H1 (cell line): ENCODE measurements at regions of chr17 and their contacts with region 1.

Region 1: GRCh38 chr17:41801374-41802271 is 10.1 kb downstream of the P3H4 start:
- DNase-seq: peak in 1 of 2 experiments; percentile 97
- H3K4me3 ChIP-seq: peak overlapping the region in 2 of 4 experiments; percentile 21 to 34; a peak in 4 of 8 replicates
- H3K27ac ChIP-seq: 0 out of 2 replicates have a peak overlapping the region, but pooled peaks have one; percentile 1
- H3K4me1 ChIP-seq: peaks cover 5 to 15% (median 10%) of the 10 kb centered on the region in 4 experiments
- H3K27me3 ChIP-seq: no peaks in the 10 kb centered on the region
- CTCF ChIP-seq: peak; percentile 92 to 97 (median 97)
- EP300 ChIP-seq: no peak
- POLR2A ChIP-seq: peak in 1 of 2 experiments; percentile 17; a peak in 1 of 3 replicates
- RAD21 ChIP-seq: peak; percentile 88 to 91

Region 2: GRCh38 chr17:41750862-41751261 is 50.8 kb before region 1 on chr17:
- CTCF ChIA-PET with region 1: interaction called, 48 read pairs
- POLR2A ChIA-PET with region 1: interaction called, 8 read pairs
- DNase-seq: no peak
- H3K4me3 ChIP-seq: no peak overlapping the region
- H3K27ac ChIP-seq: no peak overlapping the region
- H3K4me1 ChIP-seq: no peaks in the 10 kb centered on the region
- H3K27me3 ChIP-seq: no peaks in the 10 kb centered on the region; a peak in 2 of 7 replicates
- CTCF ChIP-seq: no peak
- EP300 ChIP-seq: no peak
- POLR2A ChIP-seq: no peak
- RAD21 ChIP-seq: no peak

Region 3: GRCh38 chr17:41762841-41763240 is 38.8 kb before region 1 on chr17:
- CTCF ChIA-PET with region 1: interaction called, 25 read pairs
- POLR2A ChIA-PET with region 1: interaction called, 3 read pairs
- DNase-seq: no peak
- H3K4me3 ChIP-seq: no peak overlapping the region
- H3K27ac ChIP-seq: no peak overlapping the region; the same call in 1 of the 2 replicates
- H3K4me1 ChIP-seq: no peaks in the 10 kb centered on the region
- H3K27me3 ChIP-seq: no peaks in the 10 kb centered on the region
- CTCF ChIP-seq: no peak
- EP300 ChIP-seq: no peak
- POLR2A ChIP-seq: no peak
- RAD21 ChIP-seq: no peak

Region 4: GRCh38 chr17:41777574-41778188 is 23.9 kb before region 1 on chr17:
- CTCF ChIA-PET with region 1: interaction called, 55 read pairs
- POLR2A ChIA-PET with region 1: interaction called, 71 read pairs
- DNase-seq: no peak
- H3K4me3 ChIP-seq: no peak overlapping the region
- H3K27ac ChIP-seq: no peak overlapping the region
- H3K4me1 ChIP-seq: peaks cover 0 to 49% (median 29%) of the 10 kb centered on the region in 4 experiments; a peak in 6 of 7 replicates
- H3K27me3 ChIP-seq: no peaks in the 10 kb centered on the region
- CTCF ChIP-seq: no peak
- EP300 ChIP-seq: no peak
- POLR2A ChIP-seq: no peak
- RAD21 ChIP-seq: no peak

Region 5: DNA sequence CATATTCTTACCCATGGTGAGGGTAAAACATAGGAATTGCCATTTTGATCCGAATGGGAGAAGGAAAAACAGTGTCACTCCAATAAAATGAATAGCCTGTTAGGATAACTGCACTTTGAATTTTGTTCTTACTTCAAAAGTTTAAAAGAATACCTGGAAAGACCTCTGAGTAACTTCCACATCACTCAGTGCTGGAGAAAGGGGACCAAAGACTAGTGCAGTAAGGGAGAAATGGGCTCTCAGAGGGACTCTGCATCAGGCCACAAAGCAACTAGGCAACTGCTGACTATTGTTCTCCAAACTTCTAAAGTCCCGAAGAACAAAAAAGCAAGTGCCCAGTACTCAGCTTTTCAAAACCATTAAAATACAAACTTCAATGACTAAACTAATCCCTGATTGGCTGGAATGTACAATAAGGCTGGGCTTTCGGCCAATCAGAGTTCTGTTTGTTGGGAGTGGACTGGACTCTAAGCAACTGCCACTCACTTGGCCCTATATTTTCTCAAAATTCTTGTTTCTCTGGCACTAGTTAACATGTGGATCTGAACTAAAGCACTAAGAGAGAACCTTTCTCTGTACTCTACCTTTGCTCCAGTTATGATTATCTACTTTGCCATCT is 209.4 kb after region 1 on chr17:
- CTCF ChIA-PET with region 1: no interaction called
- POLR2A ChIA-PET with region 1: no interaction called
- DNase-seq: no peak
- H3K4me3 ChIP-seq: no peak overlapping the region
- H3K27ac ChIP-seq: peak overlapping the region; percentile 64
- H3K4me1 ChIP-seq: peaks cover 6 to 19% (median 12%) of the 10 kb centered on the region in 4 experiments
- H3K27me3 ChIP-seq: no peaks in the 10 kb centered on the region
- CTCF ChIP-seq: no peak
- EP300 ChIP-seq: no peak
- POLR2A ChIP-seq: no peak
- RAD21 ChIP-seq: no peak